ENCODE measurements at regions of chr3 and their contacts with region 1.

Region 1: GRCh38 chr3:143755978-143756377 is 92.3 kb downstream of the SLC9A9 start:
- DNase-seq: no peak
- ATAC-seq: no peak
- H3K4me3 Mint-ChIP-seq: no peak overlapping the region
- H3K27ac Mint-ChIP-seq: no peak overlapping the region
- H3K4me1 Mint-ChIP-seq: peaks cover 18% of the 10 kb centered on the region
- H3K27me3 Mint-ChIP-seq: no peaks in the 10 kb centered on the region
- CTCF ChIP-seq: no peak

Region 2: GRCh38 chr3:142680710-142681109 is 1075.3 kb before region 1 on chr3:
- CTCF ChIA-PET with region 1: no interaction called
- POLR2A ChIA-PET with region 1: no interaction called
- intact Hi-C with region 1: loop called (anchors 5 kb)
- DNase-seq: no peak
- ATAC-seq: no peak
- H3K4me3 Mint-ChIP-seq: no peak overlapping the region
- H3K27ac Mint-ChIP-seq: no peak overlapping the region
- H3K4me1 Mint-ChIP-seq: no peaks in the 10 kb centered on the region
- H3K27me3 Mint-ChIP-seq: no peaks in the 10 kb centered on the region
- CTCF ChIP-seq: no peak

Region 3: DNA sequence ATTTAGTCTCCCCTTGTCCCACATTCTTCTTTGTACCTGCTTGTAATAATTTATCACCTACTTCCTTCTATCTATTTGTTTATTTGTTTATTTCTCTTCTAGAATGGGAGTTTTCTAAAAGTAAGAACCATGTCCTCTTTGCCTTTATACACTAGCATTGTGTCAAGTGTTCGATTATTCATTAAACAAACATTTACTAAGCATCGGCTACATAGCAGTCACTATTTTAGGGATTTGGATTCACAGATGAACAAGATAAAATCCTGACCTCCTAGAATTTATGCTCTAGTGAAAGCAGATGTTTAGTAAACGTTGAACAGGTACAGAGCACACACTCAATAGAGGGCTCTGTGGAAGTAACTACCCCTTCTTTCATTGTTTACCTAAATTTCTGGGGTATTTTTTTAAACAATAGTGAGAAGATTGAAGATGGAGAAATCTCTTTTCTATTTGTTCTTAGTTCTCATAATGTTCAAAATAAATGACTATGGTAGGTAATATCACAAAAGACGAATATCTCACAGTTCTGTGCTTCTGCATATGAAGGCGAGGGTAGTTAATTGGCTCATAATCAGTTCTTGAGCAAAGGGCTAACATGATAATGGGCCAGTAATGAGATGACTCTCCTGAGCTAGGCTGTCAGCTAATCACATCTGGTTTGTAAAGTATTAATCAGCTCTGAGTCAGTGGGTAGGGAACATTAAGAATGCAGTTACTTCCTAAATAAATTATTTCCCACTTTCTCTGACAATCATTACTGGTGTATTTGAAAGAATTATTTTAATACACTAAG is 19.6 kb before region 1 on chr3:
- CTCF ChIA-PET with region 1: no interaction called
- POLR2A ChIA-PET with region 1: no interaction called
- intact Hi-C with region 1: no loop called
- DNase-seq: no peak
- ATAC-seq: no peak
- H3K4me3 Mint-ChIP-seq: no peak overlapping the region
- H3K27ac Mint-ChIP-seq: no peak overlapping the region
- H3K4me1 Mint-ChIP-seq: no peaks in the 10 kb centered on the region
- H3K27me3 Mint-ChIP-seq: no peaks in the 10 kb centered on the region
- CTCF ChIP-seq: no peak

Measured in activated B cell treated with CpG ODN at 0.5 μM for 24 hours (primary cell).